Heart left ventricle (tissue), 16 donors: ENCODE measurements at regions of chr18 and their contacts with region 1.

Region 1: GRCh38 chr18:55589625-55590291 is 1.8 kb upstream of the TCF4 start:
- DNase-seq: peak; percentile 97 to 98 (median 98)
- ATAC-seq: peak; percentile 96 to 99 (median 98)
- H3K4me3 ChIP-seq: peak overlapping the region; percentile 63 to 82 (median 74)
- H3K27ac ChIP-seq: peak overlapping the region; percentile 80 to 92 (median 87)
- H3K4me1 ChIP-seq: peaks cover 0 to 23% (median 6%) of the 10 kb centered on the region in 12 donors
- H3K27me3 ChIP-seq: no peaks in the 10 kb centered on the region
- CTCF ChIP-seq: peak in 5 of 12 donors; percentile 6 to 41 (median 25)
- POLR2A ChIP-seq: peak in 1 of 2 donors; percentile 57

Region 2: GRCh38 chr18:55166260-55166598 is 423.5 kb before region 1 on chr18:
- intact Hi-C with region 1: no loop called
- DNase-seq: no peak
- ATAC-seq: no peak
- H3K4me3 ChIP-seq: no peak overlapping the region
- H3K27ac ChIP-seq: no peak overlapping the region
- H3K4me1 ChIP-seq: no peaks in the 10 kb centered on the region
- H3K27me3 ChIP-seq: no peaks in the 10 kb centered on the region
- CTCF ChIP-seq: no peak
- POLR2A ChIP-seq: no peak

Region 3: GRCh38 chr18:55243857-55244256 is 345.9 kb before region 1 on chr18:
- intact Hi-C with region 1: loop called in 5 of 10 experiments (anchors 5 to 10 kb)
- DNase-seq: peak in 4 of 5 donors; percentile 72 to 83 (median 78)
- ATAC-seq: peak; percentile 76 to 89 (median 86)
- H3K4me3 ChIP-seq: no peak overlapping the region
- H3K27ac ChIP-seq: peak overlapping the region; percentile 49 to 84 (median 77)
- H3K4me1 ChIP-seq: peaks cover 12 to 98% (median 74%) of the 10 kb centered on the region in 12 donors
- H3K27me3 ChIP-seq: no peaks in the 10 kb centered on the region
- CTCF ChIP-seq: no peak
- POLR2A ChIP-seq: no peak

Region 4: DNA sequence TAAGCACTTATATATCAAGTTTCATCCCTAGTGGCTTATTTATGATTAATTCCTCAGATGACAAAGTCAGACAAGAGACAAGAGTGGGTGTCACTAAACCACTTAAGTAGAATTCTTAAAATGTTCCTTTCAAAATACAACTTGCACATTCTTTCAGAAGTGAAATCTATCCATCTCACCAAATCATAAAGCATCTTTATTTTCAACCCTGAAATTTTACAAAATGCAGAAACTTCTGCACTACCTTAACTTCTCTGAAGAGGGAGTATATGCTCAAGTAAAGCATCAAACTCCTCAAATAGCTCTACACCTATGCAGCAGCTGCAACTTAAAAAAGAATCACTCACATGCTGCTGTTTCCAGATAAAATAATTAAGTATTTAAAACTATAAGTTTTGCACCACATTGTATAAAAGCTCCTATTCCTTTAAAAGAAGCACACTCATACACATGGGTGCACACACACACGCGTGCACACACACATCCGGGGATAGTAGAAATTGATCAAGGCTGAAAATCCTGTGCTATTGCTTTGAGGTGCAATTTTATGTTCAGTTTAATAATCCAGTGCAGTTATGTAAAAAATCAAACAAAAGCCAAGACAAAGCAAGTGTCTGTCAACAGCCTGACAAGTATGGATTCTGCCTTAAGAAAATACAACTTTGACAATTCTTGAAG is 246.2 kb before region 1 on chr18:
- intact Hi-C with region 1: loop called in 5 of 10 experiments (anchors 5 to 10 kb)
- DNase-seq: no peak
- ATAC-seq: peak in 3 of 4 donors; percentile 56 to 64 (median 57)
- H3K4me3 ChIP-seq: no peak overlapping the region
- H3K27ac ChIP-seq: peak overlapping the region in 2 of 12 donors; percentile 4 to 21
- H3K4me1 ChIP-seq: peaks cover 0 to 61% (median 17%) of the 10 kb centered on the region in 12 donors
- H3K27me3 ChIP-seq: no peaks in the 10 kb centered on the region
- CTCF ChIP-seq: peak; percentile 38 to 74 (median 58)
- POLR2A ChIP-seq: no peak

Region 5: DNA sequence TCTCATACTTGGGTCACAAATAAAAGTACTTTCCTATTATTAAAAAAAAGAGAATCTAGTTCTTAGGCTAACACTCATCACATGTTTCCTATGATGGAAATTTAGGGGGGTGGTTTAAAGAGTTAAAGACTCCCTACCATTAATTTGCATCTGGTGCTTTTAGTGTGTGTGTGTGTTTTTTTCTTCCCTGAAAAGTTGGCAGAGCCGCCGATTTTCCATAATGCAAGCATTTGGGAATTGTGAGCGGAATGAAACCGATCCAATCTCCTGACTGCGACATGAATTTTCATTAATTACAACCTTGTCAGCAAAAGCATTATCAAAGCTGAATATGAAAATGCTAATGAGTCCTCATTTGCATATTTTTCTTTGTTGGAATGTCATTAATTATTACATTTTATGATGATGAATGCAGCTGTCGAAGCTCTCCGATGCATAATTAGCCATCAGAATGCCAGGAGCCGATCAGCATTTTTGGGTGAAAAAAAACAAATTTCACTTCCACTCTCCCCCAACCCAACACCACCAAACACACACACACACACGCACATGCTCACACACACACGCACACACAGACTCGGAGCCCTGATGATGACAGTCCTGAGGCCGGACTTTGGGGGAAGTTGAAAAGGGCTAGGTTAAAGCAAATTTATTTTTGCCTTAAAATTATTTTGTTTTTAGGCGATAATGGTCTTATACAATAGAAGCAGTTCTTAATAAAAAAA is 167.1 kb before region 1 on chr18:
- intact Hi-C with region 1: loop called in 9 of 10 experiments (anchors 2 to 10 kb)
- DNase-seq: peak; percentile 47 to 78 (median 62)
- ATAC-seq: peak in 3 of 4 donors; percentile 16 to 67 (median 65)
- H3K4me3 ChIP-seq: peak overlapping the region; percentile 5 to 56 (median 44)
- H3K27ac ChIP-seq: peak overlapping the region; percentile 33 to 91 (median 84)
- H3K4me1 ChIP-seq: peaks cover 0 to 36% (median 9%) of the 10 kb centered on the region in 12 donors
- H3K27me3 ChIP-seq: no peaks in the 10 kb centered on the region
- CTCF ChIP-seq: no peak
- POLR2A ChIP-seq: no peak

Region 6: DNA sequence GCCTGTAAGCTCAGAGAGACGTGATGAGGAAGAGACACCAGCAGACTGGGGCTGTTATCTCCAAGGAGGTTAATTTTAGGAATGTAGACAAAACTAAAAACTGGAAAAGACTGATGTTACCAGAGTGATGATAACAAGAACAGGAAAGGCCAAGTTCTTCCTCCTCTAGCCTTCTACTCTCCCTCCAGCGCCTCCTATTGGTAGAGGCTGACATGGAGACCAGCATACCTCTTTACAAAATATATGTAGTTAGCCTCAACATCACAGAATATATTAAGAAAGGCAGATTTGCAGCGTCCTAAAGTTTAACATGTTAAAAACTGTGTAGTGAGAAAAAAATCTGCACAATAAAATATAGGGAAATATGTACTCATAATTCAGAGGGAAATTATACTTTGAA is 67.7 kb before region 1 on chr18:
- intact Hi-C with region 1: loop called in 4 of 10 experiments (anchors 5 to 10 kb)
- DNase-seq: peak in 1 of 5 donors; percentile 32
- ATAC-seq: peak in 1 of 4 donors; percentile 16
- H3K4me3 ChIP-seq: no peak overlapping the region
- H3K27ac ChIP-seq: peak overlapping the region in 3 of 12 donors; percentile 3 to 26 (median 6)
- H3K4me1 ChIP-seq: peaks cover 0 to 33% (median 5%) of the 10 kb centered on the region in 12 donors
- H3K27me3 ChIP-seq: no peaks in the 10 kb centered on the region
- CTCF ChIP-seq: peak in 7 of 12 donors; percentile 16 to 50 (median 32)
- POLR2A ChIP-seq: no peak

Region 7: DNA sequence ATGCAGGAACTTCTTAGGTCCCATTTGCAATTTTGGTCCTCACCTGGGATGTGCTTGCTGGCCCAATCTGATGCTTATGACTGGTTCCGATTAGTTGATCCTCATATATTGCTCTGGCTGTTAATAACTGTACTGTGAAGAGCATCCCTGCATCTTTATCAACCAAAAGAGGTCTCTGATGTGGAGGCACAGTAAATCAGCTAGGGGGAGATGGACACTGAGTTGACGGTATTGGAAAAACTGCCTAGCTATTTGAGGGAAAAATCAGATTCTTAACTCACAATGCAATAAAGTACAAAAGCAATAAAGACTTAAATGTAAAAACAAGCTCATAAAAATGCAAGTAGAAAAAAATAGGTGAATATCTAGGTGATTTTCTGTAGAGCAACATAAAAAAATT is 186.2 kb after region 1 on chr18:
- intact Hi-C with region 1: loop called in 8 of 10 experiments (anchors 1 to 5 kb)
- DNase-seq: no peak
- ATAC-seq: no peak
- H3K4me3 ChIP-seq: no peak overlapping the region
- H3K27ac ChIP-seq: peak overlapping the region in 1 of 12 donors; percentile 94
- H3K4me1 ChIP-seq: peaks cover 0 to 21% (median 13%) of the 10 kb centered on the region in 12 donors
- H3K27me3 ChIP-seq: peaks cover 0 to 3% (median 0%) of the 10 kb centered on the region in 9 donors
- CTCF ChIP-seq: peak in 4 of 12 donors; percentile 29 to 36 (median 32)
- POLR2A ChIP-seq: no peak